ENCODE measurements at regions of chr6 and their contacts with region 1.

Region 1: DNA sequence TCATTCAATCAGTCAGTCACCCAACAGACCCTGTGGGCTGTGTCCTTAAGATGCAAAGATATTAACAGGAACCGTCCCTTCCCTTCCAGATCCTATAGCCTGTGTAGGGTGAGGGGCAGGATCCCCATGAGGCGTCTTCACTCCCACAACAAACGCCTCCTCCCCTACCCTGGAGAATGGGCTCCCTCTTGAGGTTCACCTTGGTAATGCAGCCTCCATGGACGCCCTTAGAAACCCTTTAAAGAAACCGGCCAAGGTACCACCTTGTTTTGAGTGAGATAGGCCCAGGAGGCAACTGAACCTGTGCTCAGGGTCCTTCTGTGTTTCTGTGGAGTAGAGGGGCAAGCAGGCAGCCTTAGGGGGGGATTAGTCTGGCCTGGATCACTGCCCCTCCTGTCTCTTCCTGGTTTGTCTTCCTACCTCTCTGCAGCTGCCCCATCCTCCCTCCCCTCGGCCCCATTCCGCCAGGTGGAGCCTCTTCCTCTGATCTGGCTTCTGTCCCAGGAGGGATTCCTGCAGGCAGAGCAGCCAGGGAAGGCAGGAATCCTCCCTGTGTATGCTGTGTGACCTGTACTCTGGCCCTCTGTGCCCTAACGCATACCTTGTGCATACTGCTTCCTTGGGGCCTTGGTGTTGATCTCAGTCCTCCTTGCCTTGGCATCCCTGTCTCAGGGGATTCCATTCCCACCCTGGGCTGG is 6.6 kb upstream of the GUCA1A start:
- DNase-seq: peak; percentile 67 to 83
- H3K4me3 ChIP-seq: no peak overlapping the region
- H3K27ac ChIP-seq: no peak overlapping the region
- H3K4me1 ChIP-seq: 0 out of 2 replicates have a peak, but pooled peaks cover 7% of the 10 kb centered on the region
- H3K27me3 ChIP-seq: no peaks in the 10 kb centered on the region
- CTCF ChIP-seq: peak; percentile 100

Region 2: DNA sequence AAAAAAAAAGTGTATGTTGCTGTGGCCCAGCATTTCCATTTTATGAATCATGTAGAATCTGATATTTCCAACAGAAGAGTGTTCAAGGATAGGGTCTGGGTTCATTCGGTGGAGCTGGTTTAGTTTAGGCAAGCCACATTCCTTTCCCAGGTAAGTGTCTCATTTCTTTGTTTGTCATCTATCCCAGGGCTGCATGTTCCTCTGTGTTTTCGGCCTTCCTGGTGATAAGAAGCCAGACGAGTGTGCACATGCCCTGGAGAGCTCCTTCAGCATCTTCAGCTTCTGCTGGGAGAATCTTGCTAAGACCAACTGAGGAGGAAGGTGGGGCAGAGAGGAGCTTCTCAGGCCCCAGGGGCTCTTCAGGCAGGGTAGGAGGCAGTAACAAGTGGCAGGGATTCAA is 1055.6 kb before region 1 on chr6:
- CTCF ChIA-PET with region 1: no interaction called
- POLR2A ChIA-PET with region 1: no interaction called
- intact Hi-C with region 1: no loop called
- DNase-seq: no peak
- H3K4me3 ChIP-seq: no peak overlapping the region
- H3K27ac ChIP-seq: no peak overlapping the region
- H3K4me1 ChIP-seq: no peaks in the 10 kb centered on the region
- H3K27me3 ChIP-seq: no peaks in the 10 kb centered on the region
- CTCF ChIP-seq: no peak

Region 3: DNA sequence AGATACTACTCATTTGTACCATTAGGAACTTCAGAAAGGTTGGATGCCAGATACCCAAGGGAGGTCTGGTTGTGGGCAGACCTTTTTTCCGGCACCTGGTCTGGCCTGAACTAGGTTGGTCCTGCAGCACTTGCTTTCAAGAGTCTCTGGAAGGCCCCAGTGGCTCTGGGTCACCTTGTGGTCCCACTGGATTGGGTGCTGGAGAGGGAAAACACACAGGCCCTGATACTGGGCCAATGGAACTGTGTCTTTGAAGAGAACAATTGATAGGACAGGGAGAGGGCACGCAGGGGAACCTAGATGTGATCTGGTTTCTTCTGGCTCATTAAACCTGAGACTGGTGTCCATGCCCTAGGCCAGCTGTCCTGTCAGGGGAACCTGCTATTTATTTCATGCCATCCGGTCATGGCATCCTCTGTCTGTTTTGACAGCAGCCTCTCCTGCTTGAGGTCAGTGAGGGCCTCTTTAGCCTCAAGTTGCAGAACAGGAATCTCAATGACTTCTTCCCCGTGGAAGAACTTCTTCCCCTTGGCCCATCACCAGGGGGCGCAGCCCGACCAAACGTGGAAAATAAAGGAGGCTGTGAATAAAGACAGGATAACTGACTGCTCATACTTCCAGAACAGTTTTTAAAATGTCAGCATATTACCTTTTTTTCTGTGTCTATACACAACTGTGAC is 91.3 kb before region 1 on chr6:
- CTCF ChIA-PET with region 1: no interaction called
- POLR2A ChIA-PET with region 1: no interaction called
- intact Hi-C with region 1: loop called (anchors 1 kb)
- DNase-seq: peak; percentile 72 to 87
- H3K4me3 ChIP-seq: no peak overlapping the region
- H3K27ac ChIP-seq: no peak overlapping the region
- H3K4me1 ChIP-seq: 0 out of 2 replicates have a peak, but pooled peaks cover 4% of the 10 kb centered on the region
- H3K27me3 ChIP-seq: no peaks in the 10 kb centered on the region
- CTCF ChIP-seq: peak; percentile 95

Region 4: DNA sequence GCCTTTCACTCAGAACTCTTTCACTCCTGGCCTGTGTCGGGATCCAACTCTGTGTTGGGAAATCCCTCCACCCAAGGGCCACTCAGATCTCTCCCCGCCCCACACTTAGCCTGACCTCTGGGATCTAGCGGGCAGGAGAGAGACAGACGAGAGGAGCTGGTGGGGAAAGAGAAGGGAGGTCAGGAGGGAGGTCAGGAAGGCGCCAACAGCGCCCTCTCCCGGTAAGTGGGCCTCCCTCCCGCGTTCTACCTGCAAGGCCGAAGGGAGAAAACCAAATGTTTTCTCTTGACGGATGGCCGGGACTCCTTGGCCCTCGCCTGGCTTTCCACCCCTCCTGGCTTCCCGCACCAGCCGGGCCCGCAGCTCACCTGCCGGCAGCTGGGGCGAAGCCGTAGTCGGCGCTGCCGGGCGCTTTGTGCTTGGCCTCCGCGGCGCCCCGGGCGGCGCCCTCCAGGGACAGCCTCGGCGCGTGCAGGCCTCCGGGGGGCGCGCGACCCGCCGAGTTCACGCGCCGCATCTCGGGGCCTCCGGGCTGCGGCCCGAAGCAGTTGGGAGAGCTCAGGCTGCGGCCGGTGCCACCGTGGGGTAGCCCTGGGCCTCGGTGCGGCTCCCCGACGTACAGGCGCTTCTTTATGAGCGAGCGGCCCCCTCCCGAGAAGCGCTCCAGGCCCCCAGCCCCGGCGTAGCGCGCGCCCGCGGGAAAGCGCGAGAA is 62.3 kb before region 1 on chr6:
- CTCF ChIA-PET with region 1: no interaction called
- POLR2A ChIA-PET with region 1: no interaction called
- intact Hi-C with region 1: loop called (anchors 1 kb)
- DNase-seq: no peak
- H3K4me3 ChIP-seq: no peak overlapping the region
- H3K27ac ChIP-seq: no peak overlapping the region
- H3K4me1 ChIP-seq: peaks cover 29% of the 10 kb centered on the region
- H3K27me3 ChIP-seq: no peaks in the 10 kb centered on the region
- CTCF ChIP-seq: no peak

Region 5: DNA sequence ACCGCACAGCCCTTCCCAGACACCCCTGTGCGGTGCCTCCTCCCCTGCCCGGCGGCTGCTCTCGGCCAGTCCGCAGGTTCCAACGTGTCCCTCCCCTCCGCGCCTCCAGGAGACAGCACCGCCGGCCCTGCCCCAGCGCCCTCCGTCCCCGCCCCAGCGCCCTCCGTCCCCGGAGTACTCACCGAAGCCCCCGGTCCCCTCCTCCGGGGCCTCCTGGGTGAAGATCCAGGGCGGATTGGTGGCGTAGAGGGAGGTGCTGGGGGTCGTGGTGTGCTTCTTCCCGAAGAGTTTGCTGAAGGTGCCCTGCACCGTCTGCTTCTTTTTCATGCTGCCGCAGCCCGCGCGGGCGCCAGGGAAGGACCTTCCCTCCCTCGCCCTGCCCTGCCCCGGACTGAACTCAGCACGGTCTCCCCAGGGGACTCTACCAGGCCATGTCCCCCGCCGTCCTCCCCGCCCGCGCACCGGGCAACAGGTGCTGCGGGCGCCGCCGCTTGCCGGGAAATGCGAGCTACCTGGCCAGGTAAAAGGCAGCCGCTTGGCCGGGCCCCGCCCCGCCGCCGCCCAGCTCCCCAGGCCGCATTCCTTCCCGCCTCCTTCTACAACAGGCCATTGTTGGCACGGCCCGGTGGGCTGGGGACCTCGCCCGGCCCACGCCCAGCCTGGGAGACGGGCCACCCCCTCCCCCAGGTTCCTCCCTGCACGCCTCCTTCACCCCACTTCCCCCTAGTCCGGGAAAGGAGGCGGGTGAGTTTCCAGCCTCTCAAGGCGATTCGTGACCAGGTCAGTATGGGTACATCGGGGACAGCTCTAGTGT is 24.3 kb before region 1 on chr6 and contains the start of gene C6orf132:
- CTCF ChIA-PET with region 1: no interaction called
- POLR2A ChIA-PET with region 1: interaction called, 5 read pairs
- intact Hi-C with region 1: loop called (anchors 2 kb)
- DNase-seq: peak; percentile 81 to 95
- H3K4me3 ChIP-seq: peak within 1 kb of the TSS; percentile 97
- H3K27ac ChIP-seq: peak within 1 kb of the TSS; percentile 95
- H3K4me1 ChIP-seq: peaks cover 50% of the 10 kb centered on the region
- H3K27me3 ChIP-seq: no peaks in the 10 kb centered on the region
- CTCF ChIP-seq: no peak; the same call in 1 of the 2 replicates
- total RNA-seq, gene C6orf132: 49.8 and 53.9 TPM in 2 replicates

Region 6: GRCh38 chr6:42217519-42218367 is 51.1 kb after region 1 on chr6 and contains the start of gene MRPS10:
- CTCF ChIA-PET with region 1: interaction called, 3 read pairs
- POLR2A ChIA-PET with region 1: no interaction called
- intact Hi-C with region 1: loop called (anchors 1 kb)
- DNase-seq: peak; percentile 89 to 91
- H3K4me3 ChIP-seq: peak within 1 kb of the TSS; percentile 96
- H3K27ac ChIP-seq: peak within 1 kb of the TSS; percentile 76
- H3K4me1 ChIP-seq: peaks cover 59% of the 10 kb centered on the region
- H3K27me3 ChIP-seq: no peaks in the 10 kb centered on the region
- CTCF ChIP-seq: no peak
- total RNA-seq, gene MRPS10: 38.7 and 56.5 TPM in 2 replicates

Region 7: DNA sequence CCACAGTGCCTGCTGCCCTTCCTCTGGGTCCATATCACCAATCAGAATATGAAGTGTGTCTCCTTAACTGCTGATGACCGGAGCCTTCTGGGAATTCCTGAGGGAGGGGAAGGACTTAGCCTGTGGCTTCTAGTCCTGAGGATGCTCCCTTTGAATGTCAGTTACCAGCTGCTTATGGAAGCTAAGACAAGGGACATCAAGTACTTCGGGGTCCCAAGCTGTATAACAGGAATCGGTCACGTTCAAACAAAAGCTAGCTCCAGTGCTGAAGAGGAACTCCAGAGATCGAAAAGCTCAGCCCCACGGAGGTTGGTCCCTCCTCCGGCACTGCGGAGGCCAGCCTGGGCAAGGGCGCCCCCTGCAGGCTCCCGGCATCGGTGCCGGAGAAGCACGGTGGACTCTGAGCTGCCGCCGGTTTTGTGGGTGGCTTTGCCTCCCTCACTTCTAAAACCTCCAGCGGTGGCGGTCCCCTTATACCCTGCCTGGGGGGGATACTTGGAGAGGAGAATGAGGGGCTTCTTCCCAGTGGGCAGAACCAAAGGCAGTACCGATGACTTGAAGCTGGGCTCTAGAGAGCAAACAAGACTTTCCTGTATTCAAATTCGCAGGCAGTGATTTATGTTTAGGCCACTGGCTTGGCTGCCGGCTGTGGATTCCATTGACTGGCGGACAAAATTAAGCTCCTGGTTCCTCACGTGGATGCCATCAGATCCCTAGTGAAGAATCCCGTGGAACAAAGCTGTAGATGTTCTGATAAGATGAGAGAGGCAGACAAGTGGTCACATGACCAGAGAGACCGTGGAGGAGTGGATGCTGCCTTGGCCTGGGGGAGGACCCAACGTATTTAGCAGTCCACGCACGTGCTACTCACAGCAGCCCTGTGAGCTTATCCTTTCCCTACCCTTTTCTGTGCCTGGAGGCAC is 381.1 kb after region 1 on chr6:
- CTCF ChIA-PET with region 1: interaction called, 7 read pairs
- POLR2A ChIA-PET with region 1: no interaction called
- intact Hi-C with region 1: loop called (anchors 1 kb)
- DNase-seq: peak in 1 of 2 experiments; percentile 83
- H3K4me3 ChIP-seq: peak overlapping the region; percentile 51; the same call in 1 of the 2 replicates
- H3K27ac ChIP-seq: no peak overlapping the region
- H3K4me1 ChIP-seq: no peaks in the 10 kb centered on the region
- H3K27me3 ChIP-seq: no peaks in the 10 kb centered on the region
- CTCF ChIP-seq: peak; percentile 96

Measured in PC-9 (cell line).